ENCODE measurements at regions of chr9 and their contacts with region 1.

Region 1: GRCh38 chr9:83920927-83921707 is at the start of gene KIF27:
- DNase-seq: peak; percentile 94
- H3K4me3 ChIP-seq: peak within 1 kb of the TSS; percentile 70
- H3K27ac ChIP-seq: peak within 1 kb of the TSS; percentile 61
- H3K27me3 ChIP-seq: no peaks in the 10 kb centered on the region
- CTCF ChIP-seq: peak; percentile 7; the same call in 1 of the 2 replicates
- polyA plus RNA-seq, gene KIF27: 1.1 and 2.1 TPM in 2 replicates

Region 2: GRCh38 chr9:83649080-83649479 is 272.0 kb before region 1 on chr9:
- CTCF ChIA-PET with region 1: no interaction called
- POLR2A ChIA-PET with region 1: no interaction called
- DNase-seq: no peak
- H3K4me3 ChIP-seq: no peak overlapping the region
- H3K27ac ChIP-seq: no peak overlapping the region
- H3K27me3 ChIP-seq: no peaks in the 10 kb centered on the region
- CTCF ChIP-seq: peak; percentile 70

Region 3: GRCh38 chr9:83775932-83776331 is 145.2 kb before region 1 on chr9:
- CTCF ChIA-PET with region 1: no interaction called
- POLR2A ChIA-PET with region 1: no interaction called
- DNase-seq: no peak
- H3K4me3 ChIP-seq: no peak overlapping the region
- H3K27ac ChIP-seq: no peak overlapping the region
- H3K27me3 ChIP-seq: no peaks in the 10 kb centered on the region
- CTCF ChIP-seq: no peak

Region 4: DNA sequence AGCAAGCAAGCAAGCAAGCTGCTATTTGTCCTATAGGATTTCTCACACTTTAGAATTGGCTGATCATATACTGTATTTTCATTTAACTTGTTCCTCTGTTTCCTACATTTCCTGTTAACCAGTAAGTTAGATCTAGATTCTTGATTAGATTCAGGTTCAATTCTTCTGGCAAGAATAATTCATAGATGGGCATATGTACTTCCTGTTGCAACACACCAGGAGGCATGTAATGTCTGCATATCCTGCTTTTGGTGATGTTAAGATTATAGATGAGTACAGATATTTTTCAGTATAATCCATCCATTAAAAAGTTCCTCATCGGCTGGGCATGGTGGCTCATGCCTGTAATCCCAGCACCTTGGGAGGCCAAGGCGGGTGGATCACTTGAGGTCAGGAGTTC is 10.9 kb after region 1 on chr9:
- CTCF ChIA-PET with region 1: interaction called, 9 read pairs
- POLR2A ChIA-PET with region 1: interaction called, 15 read pairs
- DNase-seq: no peak
- H3K4me3 ChIP-seq: no peak overlapping the region
- H3K27ac ChIP-seq: no peak overlapping the region
- H3K27me3 ChIP-seq: peaks cover 3% of the 10 kb centered on the region
- CTCF ChIP-seq: no peak

Region 5: GRCh38 chr9:84045482-84046097 is 124.5 kb after region 1 on chr9:
- CTCF ChIA-PET with region 1: no interaction called
- POLR2A ChIA-PET with region 1: no interaction called
- DNase-seq: no peak
- H3K4me3 ChIP-seq: no peak overlapping the region
- H3K27ac ChIP-seq: no peak overlapping the region
- H3K27me3 ChIP-seq: no peaks in the 10 kb centered on the region
- CTCF ChIP-seq: no peak

Measured in AG04450 (cell line).